GM10248 (cell line): ENCODE measurements at regions of chr15 and their contacts with region 1.

Region 1: GRCh38 chr15:70488002-70488605 is 275.3 kb downstream of the UACA start:
- DNase-seq: peak; percentile 73
- CTCF ChIP-seq: peak; percentile 93

Region 2: GRCh38 chr15:70474471-70475396 is 13.4 kb before region 1 on chr15:
- CTCF ChIA-PET with region 1: interaction called, 285 read pairs
- POLR2A ChIA-PET with region 1: no interaction called
- DNase-seq: no peak
- CTCF ChIP-seq: no peak

Region 3: GRCh38 chr15:70504299-70504951 is 16.3 kb after region 1 on chr15:
- CTCF ChIA-PET with region 1: interaction called, 101 read pairs
- POLR2A ChIA-PET with region 1: interaction called, 8 read pairs
- DNase-seq: peak; percentile 69
- CTCF ChIP-seq: no peak

Region 4: GRCh38 chr15:70608144-70608543 is 120.0 kb after region 1 on chr15:
- CTCF ChIA-PET with region 1: no interaction called
- POLR2A ChIA-PET with region 1: no interaction called
- DNase-seq: no peak
- CTCF ChIP-seq: no peak